OCI-LY7 (cell line): ENCODE measurements at regions of chr14 and their contacts with region 1.

Region 1: DNA sequence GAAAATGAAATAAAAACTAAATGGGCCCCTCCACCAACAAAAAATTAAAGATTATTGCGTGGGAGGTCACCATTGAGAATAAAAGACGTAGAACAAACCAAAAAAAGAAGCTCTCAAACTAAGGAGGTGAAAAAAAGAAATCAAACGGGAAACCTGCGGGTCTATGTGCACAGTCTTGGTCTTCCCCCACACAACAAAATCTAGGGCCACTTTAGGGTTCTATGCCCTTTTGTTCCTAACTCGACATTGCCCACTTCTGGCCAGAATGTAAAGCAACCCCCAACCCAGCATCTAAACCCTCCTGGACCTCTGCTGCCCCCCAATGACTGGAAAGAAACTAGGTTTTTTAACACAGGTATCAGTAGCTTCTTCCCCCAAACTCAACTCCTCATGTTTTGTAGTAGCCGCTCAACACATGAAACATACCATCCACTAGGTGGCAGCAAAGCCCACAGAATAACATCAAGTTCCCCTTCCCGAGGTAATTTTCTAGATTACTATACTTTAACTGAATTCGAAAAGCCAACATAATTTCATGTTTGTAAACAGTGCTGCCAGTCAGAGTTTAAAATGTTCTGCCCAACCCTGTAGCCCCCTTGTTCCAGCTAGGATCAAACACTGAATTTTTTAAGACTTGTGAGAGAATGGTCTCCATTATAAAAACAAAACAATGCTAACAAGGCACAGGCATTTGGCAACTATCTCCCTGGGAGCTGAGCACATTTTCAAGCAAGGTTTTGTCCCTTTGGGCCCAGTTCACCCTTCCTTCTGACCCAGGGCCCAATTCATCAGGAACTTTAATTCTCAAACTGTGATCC is 18.7 kb downstream of the DAD1 start:
- DNase-seq: peak; percentile 98
- H3K4me3 ChIP-seq: peak overlapping the region; percentile 65
- H3K27ac ChIP-seq: peak overlapping the region; percentile 83
- H3K4me1 ChIP-seq: peaks cover 56% of the 10 kb centered on the region
- CTCF ChIP-seq: peak; percentile 100

Region 2: GRCh38 chr14:22314181-22314820 is 256.0 kb before region 1 on chr14:
- CTCF ChIA-PET with region 1: no interaction called
- POLR2A ChIA-PET with region 1: no interaction called
- intact Hi-C with region 1: loop called (anchors 5 kb)
- DNase-seq: peak; percentile 81
- H3K4me3 ChIP-seq: no peak overlapping the region
- H3K27ac ChIP-seq: no peak overlapping the region
- H3K4me1 ChIP-seq: peaks cover 8% of the 10 kb centered on the region
- CTCF ChIP-seq: peak; percentile 96

Region 3: DNA sequence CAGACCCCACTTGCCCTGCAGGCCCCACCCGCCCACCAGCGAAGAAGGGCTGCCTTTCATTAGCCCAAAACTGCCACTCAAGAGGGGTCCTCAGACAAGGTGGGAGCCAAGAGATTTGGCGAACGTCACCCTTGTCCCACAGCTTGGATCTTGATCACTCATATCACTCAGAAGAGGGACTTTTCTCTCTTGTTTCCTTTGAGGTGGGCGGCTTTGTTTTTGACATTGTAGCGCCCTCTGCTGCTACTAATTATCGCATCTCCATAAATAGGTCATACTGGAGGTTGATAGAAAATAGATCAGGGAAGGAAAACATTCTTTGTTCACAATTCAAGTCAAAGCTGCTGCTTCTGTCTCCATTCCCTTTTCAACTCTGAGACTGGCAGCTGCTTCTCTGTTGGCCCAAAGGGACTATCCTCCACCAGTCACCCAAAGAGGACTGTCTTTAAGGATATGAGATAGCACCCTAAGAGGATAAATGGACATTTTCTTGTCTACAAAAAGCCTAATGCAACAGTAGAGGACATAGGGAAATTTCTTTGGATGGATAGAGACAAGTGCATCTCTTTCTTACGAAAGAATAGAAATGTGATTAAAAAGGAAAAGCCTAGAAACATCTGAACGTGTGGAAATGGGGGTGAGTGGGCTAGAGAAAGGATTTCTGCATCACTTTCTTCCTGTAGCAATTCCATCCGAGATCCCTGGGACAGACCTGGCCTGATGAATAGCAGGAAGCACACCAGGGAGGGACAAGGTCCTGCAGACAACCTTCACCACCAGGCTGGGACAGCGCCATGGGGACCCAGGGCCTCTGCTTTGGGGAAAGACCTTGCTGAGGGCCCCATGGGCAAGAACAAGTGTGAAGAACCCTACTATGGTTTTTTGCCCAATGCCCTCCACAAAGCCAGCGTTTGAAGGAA is 97.1 kb before region 1 on chr14:
- CTCF ChIA-PET with region 1: interaction called, 4 read pairs
- POLR2A ChIA-PET with region 1: interaction called, 10 read pairs
- intact Hi-C with region 1: loop called (anchors 1 kb)
- DNase-seq: peak; percentile 89
- H3K4me3 ChIP-seq: peak overlapping the region; percentile 37
- H3K27ac ChIP-seq: peak overlapping the region; percentile 81
- H3K4me1 ChIP-seq: peaks cover 98% of the 10 kb centered on the region
- CTCF ChIP-seq: peak; percentile 96

Region 4: DNA sequence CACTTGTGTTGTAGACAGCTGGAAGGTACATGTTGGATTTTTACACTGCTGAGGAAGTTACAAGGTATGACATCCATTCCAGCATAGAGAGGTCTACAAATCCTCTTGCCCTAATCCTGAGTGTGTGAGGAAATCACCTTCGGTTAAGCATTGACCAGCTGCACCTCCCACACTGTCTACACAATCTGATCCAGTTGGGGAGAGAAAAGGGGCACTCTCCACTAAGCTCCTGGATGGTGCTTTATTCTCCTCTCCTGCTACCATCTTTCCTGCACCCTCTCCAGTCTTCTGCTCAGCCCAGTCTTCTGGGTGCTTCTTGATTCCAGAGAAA is 73.9 kb after region 1 on chr14 and contains the start of gene OR6J1:
- CTCF ChIA-PET with region 1: interaction called, 4 read pairs
- POLR2A ChIA-PET with region 1: interaction called, 3 read pairs
- intact Hi-C with region 1: loop called (anchors 2 kb)
- DNase-seq: no peak
- H3K4me3 ChIP-seq: no peak within 1 kb of the TSS
- H3K27ac ChIP-seq: no peak within 1 kb of the TSS
- H3K4me1 ChIP-seq: peaks cover 3% of the 10 kb centered on the region
- CTCF ChIP-seq: peak; percentile 25; the same call in 1 of the 2 replicates
- total RNA-seq, gene OR6J1: not detected in 2 replicates

Region 5: DNA sequence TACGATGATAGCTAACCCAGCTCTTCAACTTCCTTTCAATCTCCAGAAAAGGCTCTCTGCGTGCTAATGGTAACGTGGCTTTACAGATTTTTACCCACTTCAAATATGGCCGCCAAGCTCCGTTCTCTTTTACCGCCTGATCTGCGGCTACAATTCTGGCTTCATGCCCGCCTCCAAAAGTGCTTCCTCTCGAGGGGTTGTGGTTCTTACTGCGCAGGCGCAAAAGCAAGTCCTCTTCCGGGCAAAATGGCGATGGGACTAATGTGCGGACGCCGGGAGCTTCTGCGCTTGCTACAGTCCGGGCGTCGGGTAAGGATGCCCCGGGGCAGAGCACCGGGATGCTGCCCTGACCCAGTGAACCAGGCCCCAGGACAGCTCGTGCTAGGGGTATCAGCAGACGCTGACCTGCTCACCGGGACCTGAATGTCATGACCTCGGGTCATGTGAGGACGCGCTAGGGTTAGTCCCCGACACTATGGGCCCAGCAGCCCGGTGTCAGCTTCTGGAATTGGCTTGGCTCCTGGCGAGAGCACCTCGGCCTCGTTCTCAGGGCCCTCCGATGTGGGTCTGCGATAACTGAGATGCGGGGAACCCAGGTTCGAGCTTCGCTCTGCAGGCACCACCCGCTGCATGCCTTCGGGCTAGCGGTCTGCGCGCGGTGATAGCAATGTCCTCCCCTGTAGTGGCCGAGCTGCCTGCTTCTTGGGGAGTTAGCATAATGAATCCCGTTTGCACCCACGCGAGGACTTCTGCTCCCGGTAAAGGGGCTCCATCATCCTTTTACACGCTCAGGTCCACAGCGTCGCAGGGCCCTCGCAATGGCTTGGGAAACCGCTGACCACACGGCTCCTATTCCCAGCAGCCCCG is 196.3 kb after region 1 on chr14 and contains the start of gene OXA1L:
- CTCF ChIA-PET with region 1: no interaction called
- POLR2A ChIA-PET with region 1: interaction called, 5 read pairs
- intact Hi-C with region 1: loop called (anchors 1 kb)
- DNase-seq: peak; percentile 99
- H3K4me3 ChIP-seq: peak within 1 kb of the TSS; percentile 95
- H3K27ac ChIP-seq: peak within 1 kb of the TSS; percentile 57
- H3K4me1 ChIP-seq: peaks cover 24% of the 10 kb centered on the region
- CTCF ChIP-seq: no peak
- total RNA-seq, gene OXA1L: 128 and 153 TPM in 2 replicates

Region 6: GRCh38 chr14:23057757-23058653 is 487.7 kb after region 1 on chr14:
- CTCF ChIA-PET with region 1: no interaction called
- POLR2A ChIA-PET with region 1: interaction called, 4 read pairs
- intact Hi-C with region 1: loop called (anchors 10 kb)
- DNase-seq: peak; percentile 86
- H3K4me3 ChIP-seq: peak overlapping the region; percentile 62
- H3K27ac ChIP-seq: no peak overlapping the region
- H3K4me1 ChIP-seq: peaks cover 27% of the 10 kb centered on the region
- CTCF ChIP-seq: peak; percentile 95